ENCODE measurements at regions of chr20 and their contacts with region 1.

Region 1: DNA sequence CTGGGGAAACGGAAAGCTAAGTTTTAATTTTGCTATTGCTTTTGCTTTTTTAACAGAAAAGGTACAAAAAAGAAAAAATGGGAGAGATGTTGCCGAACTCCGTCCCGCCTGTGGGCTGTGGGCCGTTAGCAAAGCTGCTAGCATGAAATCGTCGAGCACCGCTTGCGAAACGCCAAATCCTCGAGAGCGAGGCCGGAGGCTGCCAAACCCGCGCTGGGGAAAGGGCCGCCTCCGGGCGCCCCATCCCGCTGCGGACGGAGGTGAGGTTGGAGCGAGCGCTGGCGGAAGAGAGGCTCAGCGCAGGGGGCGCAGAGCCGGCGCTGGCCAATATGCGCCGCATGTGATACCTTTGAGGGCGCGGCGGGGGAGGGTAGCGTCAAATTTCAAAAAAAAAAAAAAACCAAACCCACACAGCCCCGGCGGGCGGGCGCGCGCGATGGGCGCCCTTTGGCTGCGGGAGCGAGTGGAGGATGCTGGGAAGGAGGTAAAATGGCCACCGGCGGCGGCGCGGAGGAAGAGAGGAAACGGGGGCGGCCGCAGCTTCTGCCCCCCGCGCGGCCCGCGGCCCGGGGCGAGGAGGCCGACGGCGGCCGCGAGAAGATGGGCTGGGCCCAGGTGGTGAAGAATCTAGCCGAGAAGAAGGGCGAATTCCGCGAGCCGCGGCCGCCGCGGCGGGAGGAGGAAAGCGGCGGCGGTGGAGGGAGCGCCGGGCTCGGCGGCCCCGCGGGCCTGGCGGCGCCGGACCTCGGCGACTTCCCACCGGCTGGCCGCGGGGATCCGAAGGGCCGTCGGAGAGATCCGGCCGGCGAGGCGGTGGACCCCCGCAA is at the start of gene ZCCHC3:
- DNase-seq: peak; percentile 96
- H3K4me3 ChIP-seq: peak within 1 kb of the TSS; percentile 88
- H3K27ac ChIP-seq: peak within 1 kb of the TSS; percentile 99
- H3K4me1 ChIP-seq: peaks cover 31% of the 10 kb centered on the region
- H3K27me3 ChIP-seq: no peaks in the 10 kb centered on the region
- CTCF ChIP-seq: no peak; the same call in 1 of the 2 replicates
- total RNA-seq, gene ZCCHC3: 38.0 and 39.6 TPM in 2 replicates

Region 2: DNA sequence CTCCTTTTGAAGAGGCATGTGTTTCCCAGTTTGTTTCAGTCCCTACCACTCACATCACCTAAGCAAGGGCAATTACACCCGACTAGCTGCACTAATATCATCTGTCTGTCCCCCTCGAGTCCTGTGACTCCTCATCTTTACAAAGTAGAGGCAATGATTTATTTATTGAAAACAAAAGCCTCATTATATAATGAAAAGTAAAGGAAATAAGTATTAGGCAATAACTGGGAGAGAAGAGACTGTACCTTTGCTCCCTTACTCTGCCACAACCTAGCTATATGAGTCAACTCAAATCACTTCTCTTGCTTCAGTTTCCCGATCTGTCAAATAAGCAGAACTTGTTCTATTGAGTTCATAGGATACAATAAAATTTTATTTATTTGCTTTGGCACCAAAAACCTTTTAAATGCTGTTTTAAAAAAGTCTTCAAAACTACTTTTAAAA is 207.3 kb after region 1 on chr20:
- CTCF ChIA-PET with region 1: interaction called, 12 read pairs
- POLR2A ChIA-PET with region 1: no interaction called
- intact Hi-C with region 1: no loop called
- DNase-seq: no peak
- H3K4me3 ChIP-seq: no peak overlapping the region
- H3K27ac ChIP-seq: no peak overlapping the region
- H3K4me1 ChIP-seq: no peaks in the 10 kb centered on the region
- H3K27me3 ChIP-seq: no peaks in the 10 kb centered on the region
- CTCF ChIP-seq: no peak

Region 3: GRCh38 chr20:745683-746301 is 448.5 kb after region 1 on chr20:
- CTCF ChIA-PET with region 1: no interaction called
- POLR2A ChIA-PET with region 1: no interaction called
- intact Hi-C with region 1: no loop called
- DNase-seq: no peak
- H3K4me3 ChIP-seq: no peak overlapping the region
- H3K27ac ChIP-seq: no peak overlapping the region
- H3K4me1 ChIP-seq: no peaks in the 10 kb centered on the region
- H3K27me3 ChIP-seq: no peaks in the 10 kb centered on the region
- CTCF ChIP-seq: no peak